Testis (tissue), 5 donors: ENCODE measurements at regions of chr15 and their contacts with region 1.

Region 1: DNA sequence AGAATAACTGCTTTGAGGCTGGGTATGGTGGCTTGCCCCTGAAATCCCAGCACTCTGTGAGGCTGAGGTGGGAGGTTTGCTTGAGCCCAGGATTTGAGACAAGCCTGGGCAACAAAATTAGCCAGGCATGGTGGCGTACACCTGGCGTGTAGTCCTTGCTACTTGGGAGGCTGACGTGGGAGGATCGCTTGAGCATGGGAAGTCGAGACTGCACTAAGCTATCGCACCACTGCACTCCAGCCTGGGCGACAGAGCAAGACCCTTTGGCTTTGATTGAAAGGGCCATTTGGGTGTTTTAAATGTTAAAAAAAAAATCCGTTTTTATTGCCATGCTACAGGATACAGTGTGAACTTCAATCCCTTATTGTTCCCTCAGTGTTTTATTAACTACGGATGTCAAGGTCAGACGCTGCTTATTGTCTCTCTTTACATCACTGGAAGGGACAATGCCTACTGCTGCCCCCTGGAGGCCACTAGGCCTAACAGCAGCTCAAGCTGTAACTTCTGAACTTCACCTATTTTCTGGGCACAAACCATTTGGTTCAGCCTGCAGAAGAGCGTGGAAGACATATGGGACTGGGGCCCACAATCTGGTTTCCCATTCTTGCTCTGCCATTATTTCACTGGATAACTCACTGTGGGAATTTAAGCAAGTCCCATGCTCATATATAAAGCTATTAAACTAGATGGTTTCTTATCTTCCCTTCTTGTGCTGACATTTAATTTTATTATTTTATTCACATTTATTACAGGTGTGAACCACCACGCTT is 15.3 kb upstream of the IREB2 start:
- DNase-seq: peak; percentile 69
- H3K4me3 ChIP-seq: no peak overlapping the region
- H3K27ac ChIP-seq: no peak overlapping the region
- H3K4me1 ChIP-seq: no peaks in the 10 kb centered on the region
- H3K27me3 ChIP-seq: no peaks in the 10 kb centered on the region
- CTCF ChIP-seq: peak; percentile 77 to 92 (median 79)
- POLR2A ChIP-seq: no peak

Region 2: GRCh38 chr15:78302579-78303342 is 120.0 kb before region 1 on chr15:
- intact Hi-C with region 1: no loop called
- DNase-seq: no peak
- H3K4me3 ChIP-seq: no peak overlapping the region
- H3K27ac ChIP-seq: no peak overlapping the region
- H3K4me1 ChIP-seq: peaks cover 8% of the 10 kb centered on the region
- H3K27me3 ChIP-seq: no peaks in the 10 kb centered on the region
- CTCF ChIP-seq: no peak
- POLR2A ChIP-seq: no peak

Region 3: DNA sequence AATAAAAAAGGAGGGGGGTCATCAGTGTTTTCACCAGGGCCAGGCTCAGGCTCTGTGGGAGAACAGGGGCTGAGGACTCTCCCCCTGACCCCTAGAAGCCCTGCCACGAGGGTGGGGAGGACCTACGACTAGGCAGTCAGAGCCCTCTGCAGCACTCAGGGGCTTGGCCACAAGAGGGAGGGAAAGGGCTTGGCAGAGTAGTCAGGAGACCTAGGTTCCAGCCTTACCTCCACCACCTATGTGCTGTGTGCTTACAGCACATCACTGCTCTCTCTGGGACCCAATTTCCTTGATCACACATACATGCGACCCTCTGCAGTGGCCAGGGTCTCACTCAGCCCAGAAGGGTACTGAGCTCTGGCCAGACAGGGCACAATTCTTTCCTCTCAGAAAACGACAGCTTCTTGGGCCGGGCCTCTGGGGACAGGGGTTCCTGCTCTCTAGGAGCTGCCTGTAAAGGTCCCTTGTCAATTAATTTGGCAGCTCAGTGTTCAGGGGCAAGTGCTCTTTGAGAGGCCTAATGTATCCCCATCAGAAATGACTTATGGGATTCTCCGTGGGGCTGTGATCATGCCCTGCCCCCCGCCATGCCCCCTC is 107.0 kb before region 1 on chr15:
- intact Hi-C with region 1: loop called (anchors 10 kb)
- DNase-seq: no peak
- H3K4me3 ChIP-seq: no peak overlapping the region
- H3K27ac ChIP-seq: no peak overlapping the region
- H3K4me1 ChIP-seq: no peaks in the 10 kb centered on the region
- H3K27me3 ChIP-seq: no peaks in the 10 kb centered on the region
- CTCF ChIP-seq: peak in 1 of 3 experiments; percentile 4
- POLR2A ChIP-seq: no peak

Region 4: DNA sequence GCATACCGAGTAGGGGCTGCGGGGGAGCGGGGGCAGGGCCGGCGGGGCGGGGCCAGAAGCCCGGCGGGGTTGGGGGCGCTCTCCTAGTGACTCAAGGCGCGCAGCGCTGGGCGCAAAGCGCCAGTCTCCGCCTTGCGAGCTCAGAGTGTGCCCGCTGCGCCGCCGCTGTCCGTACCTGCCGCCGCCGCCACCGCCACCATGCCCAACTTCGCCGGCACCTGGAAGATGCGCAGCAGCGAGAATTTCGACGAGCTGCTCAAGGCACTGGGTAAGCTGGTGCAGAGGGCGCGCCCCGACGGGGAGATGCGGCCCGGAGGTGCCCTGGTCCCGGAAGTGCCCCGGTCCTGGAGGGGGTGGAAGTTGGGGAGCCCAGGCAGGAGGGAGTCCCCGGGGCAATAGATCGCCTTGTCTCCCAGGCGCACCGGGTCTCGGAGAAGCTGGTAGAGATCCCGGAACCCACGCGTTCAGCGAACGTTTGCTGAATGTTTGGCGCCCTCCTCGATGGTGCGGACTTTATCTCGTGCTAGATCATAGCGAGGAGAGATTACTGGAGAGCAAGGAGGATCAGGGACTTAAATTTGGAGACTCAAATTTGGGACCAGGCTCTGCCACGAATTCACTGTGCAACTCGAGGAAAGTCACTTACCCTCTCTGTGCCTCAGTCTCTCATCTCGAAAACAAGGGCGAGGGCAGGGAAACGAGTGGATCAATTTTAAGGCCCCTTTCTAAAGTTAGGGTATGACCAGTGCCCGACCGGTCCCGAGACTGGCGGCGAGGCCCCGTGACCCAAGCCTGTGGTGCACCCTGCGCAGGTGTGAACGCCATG is 82.3 kb before region 1 on chr15 and contains the start of gene CRABP1:
- intact Hi-C with region 1: no loop called
- DNase-seq: no peak
- H3K4me3 ChIP-seq: peak within 1 kb of the TSS; percentile 12 to 29
- H3K27ac ChIP-seq: no peak within 1 kb of the TSS
- H3K4me1 ChIP-seq: no peaks in the 10 kb centered on the region
- H3K27me3 ChIP-seq: no peaks in the 10 kb centered on the region
- CTCF ChIP-seq: no peak
- POLR2A ChIP-seq: no peak
- total RNA-seq, gene CRABP1: 0.74 to 2.4 TPM

Region 5: GRCh38 chr15:78604420-78604819 is 181.7 kb after region 1 on chr15:
- intact Hi-C with region 1: no loop called
- DNase-seq: no peak
- H3K4me3 ChIP-seq: no peak overlapping the region
- H3K27ac ChIP-seq: no peak overlapping the region
- H3K4me1 ChIP-seq: no peaks in the 10 kb centered on the region
- H3K27me3 ChIP-seq: no peaks in the 10 kb centered on the region
- CTCF ChIP-seq: no peak
- POLR2A ChIP-seq: no peak